Endothelial cell of umbilical vein (primary cell): ENCODE measurements at regions of chr7 and their contacts with region 1.

Region 1: DNA sequence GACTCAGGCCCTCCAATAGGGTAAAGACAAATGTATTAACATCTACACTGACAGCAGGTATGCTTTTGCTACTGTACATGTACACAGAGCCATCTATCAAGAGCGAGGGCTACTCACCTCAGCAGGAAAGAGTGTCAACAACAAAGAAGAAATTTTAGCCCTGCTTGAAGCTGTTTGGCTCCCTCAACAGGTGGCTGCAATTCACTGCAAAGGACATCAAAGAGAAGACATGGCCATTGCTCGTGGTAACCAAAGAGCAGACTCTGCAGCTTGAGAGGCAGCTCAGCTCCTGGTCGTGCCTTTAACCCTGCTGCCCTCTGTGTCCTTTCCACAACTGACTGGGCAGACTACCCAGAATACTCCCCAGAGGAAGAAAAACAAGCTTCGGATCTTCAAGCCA is 5.1 kb downstream of the AKR1B15 start:
- DNase-seq: no peak
- H3K4me3 ChIP-seq: no peak overlapping the region
- H3K27ac ChIP-seq: no peak overlapping the region
- H3K4me1 ChIP-seq: no peaks in the 10 kb centered on the region
- H3K27me3 ChIP-seq: peaks cover 0 to 11% of the 10 kb centered on the region in 2 experiments
- CTCF ChIP-seq: peak in 1 of 2 donors; percentile 10
- POLR2A ChIP-seq: no peak

Region 2: DNA sequence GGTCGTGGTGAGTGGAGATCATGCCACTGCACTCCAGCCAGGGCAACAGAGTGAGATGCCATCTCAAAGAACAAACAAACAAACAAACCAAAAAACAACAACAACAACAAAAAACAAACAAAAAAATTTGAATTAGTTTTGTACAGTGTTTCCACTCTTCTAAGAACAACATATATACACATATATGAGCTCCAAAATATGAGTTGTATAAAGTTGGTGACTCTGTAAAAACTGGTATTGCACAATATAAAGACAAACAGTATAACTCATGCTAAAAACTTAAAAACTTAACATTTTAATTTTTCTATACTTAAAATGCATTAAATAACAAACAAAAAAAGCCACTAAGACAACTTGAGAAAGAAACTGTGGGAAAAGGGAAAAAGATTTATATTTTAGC is 40.9 kb after region 1 on chr7:
- CTCF ChIA-PET with region 1: no interaction called
- POLR2A ChIA-PET with region 1: no interaction called
- dilution Hi-C with region 1: no loop called
- intact Hi-C with region 1: no loop called
- DNase-seq: no peak
- H3K4me3 ChIP-seq: no peak overlapping the region
- H3K27ac ChIP-seq: peak overlapping the region; percentile 94
- H3K4me1 ChIP-seq: peaks cover 12% of the 10 kb centered on the region
- H3K27me3 ChIP-seq: no peaks in the 10 kb centered on the region
- CTCF ChIP-seq: no peak
- POLR2A ChIP-seq: no peak

Region 3: DNA sequence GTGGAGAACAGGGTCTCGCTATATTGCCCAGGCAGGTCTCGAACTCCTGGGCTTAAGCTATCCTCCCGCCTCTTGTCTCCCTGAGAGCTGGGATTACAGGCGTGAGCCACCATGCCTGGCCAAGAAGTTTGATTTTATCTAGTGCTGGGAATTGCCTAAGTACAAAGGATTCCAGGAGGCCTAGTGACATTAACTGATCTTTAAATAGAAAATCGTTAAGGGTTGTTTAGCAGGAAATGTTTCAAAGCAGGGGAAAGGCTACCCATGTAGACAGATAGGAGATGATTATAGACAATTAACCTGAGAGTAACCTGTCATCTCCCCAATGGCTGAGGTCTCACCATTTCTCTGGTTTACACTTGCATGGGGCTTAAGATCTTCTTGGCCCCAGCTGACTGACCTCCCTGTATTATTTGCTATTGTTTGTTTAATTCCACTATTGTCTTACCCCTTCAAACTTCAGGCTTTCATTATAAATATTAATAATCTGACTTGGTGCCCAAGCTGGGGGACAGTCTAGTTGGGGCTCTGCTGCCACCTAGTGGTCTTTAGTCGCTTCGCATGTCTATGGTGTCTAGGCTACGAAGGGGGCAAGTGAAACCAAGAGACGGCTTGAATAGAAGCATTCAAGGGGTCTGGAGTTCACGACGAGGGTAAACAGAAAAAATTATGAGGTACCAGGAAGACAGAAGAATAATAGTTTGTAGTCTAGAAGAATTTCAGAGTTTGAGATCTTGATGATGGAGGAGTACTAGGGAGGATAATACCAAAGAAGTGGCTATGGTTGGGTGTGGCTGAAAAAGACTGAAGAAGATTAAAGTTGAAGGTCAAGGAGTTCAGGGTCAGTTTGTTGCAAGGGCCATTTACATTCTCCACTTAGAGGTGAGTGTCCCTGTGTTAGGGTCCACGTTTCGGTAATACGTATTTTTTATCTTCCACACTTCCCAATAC is 52.3 kb after region 1 on chr7:
- CTCF ChIA-PET with region 1: interaction called, 23 read pairs
- POLR2A ChIA-PET with region 1: no interaction called
- dilution Hi-C with region 1: no loop called
- intact Hi-C with region 1: no loop called
- DNase-seq: peak; percentile 80
- H3K4me3 ChIP-seq: no peak overlapping the region
- H3K27ac ChIP-seq: no peak overlapping the region
- H3K4me1 ChIP-seq: peaks cover 10% of the 10 kb centered on the region
- H3K27me3 ChIP-seq: no peaks in the 10 kb centered on the region
- CTCF ChIP-seq: peak; percentile 81 to 86
- POLR2A ChIP-seq: no peak